BJ (cell line): ENCODE measurements at regions of chr1 and their contacts with region 1.

Region 1: GRCh38 chr1:206982216-206982615 is 12.0 kb upstream of the FCAMR start:
- DNase-seq: no peak
- H3K4me3 ChIP-seq: no peak overlapping the region
- H3K27me3 ChIP-seq: peaks cover 7% of the 10 kb centered on the region
- CTCF ChIP-seq: peak; percentile 73

Region 2: DNA sequence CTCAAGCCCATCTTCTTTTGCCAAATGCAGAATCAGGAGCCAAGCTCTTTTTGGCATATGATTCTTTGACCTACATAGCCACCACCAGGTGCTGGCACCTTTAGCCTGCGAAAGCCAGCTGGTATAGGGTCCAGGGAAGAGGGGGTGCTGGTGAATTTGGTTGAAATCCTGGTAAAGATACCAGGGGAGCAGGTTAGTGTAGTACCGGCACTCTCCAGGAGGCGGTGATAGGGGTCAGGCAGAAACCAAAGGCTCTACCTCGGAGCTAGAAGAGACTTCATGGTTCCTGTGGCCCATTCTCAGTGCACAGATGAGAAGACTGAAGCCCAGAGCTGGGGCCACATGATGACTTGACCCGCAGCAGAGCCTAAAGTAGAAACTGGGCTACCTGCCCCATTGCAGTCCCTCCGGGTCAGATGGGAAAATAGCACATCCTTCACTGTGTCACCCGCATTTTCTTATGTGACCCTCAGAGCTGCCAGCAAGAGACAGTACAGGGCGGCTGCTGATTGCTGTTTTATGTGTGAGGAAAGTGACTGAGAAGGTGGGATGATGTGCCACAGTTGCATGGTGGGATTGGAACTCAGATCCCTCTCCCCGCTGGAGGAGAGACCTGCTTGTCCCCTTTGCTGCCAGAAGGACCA is 247.6 kb before region 1 on chr1:
- CTCF ChIA-PET with region 1: interaction called, 10 read pairs
- POLR2A ChIA-PET with region 1: no interaction called
- DNase-seq: no peak
- H3K4me3 ChIP-seq: no peak overlapping the region
- H3K27me3 ChIP-seq: no peaks in the 10 kb centered on the region
- CTCF ChIP-seq: peak; percentile 88

Region 3: DNA sequence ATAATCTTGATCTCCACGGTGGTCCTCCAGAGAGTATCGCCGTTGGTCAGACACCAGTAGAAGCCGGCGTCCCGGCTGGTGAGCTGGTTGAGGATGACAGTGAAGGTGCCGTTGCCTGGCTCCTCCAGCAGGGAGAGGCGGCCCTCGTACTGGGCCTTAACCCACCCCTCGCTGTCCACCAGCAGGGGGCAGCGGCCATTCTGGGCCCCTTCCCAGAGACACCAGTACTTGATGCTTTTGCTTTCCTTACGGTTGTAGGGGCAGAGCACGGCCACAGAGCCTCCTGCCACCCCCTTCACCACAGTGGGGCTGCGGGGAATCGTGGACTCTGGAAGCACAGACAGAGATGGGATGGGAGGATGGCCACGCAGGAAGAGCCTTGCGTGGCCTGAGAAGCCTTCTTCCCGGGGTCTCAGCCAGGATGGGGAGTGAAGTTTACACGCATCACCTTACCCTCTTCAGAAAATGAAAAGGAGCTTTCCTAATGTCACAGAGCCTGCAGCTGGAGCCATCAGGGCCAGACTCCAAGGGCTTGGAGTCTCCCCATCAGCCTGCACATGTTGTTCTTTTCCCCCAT is 46.6 kb before region 1 on chr1:
- CTCF ChIA-PET with region 1: interaction called, 15 read pairs
- POLR2A ChIA-PET with region 1: no interaction called
- DNase-seq: no peak
- H3K4me3 ChIP-seq: no peak overlapping the region
- H3K27me3 ChIP-seq: peaks cover 1% of the 10 kb centered on the region; the same call in 1 of the 2 replicates
- CTCF ChIP-seq: peak; percentile 60

Region 4: GRCh38 chr1:206992790-206993189 is 10.6 kb after region 1 on chr1:
- CTCF ChIA-PET with region 1: interaction called, 24 read pairs
- POLR2A ChIA-PET with region 1: no interaction called
- DNase-seq: no peak
- H3K4me3 ChIP-seq: no peak overlapping the region
- H3K27me3 ChIP-seq: peaks cover 10% of the 10 kb centered on the region
- CTCF ChIP-seq: no peak